Testis (tissue), 5 donors: ENCODE measurements at regions of chr5 and their contacts with region 1.

Region 1: DNA sequence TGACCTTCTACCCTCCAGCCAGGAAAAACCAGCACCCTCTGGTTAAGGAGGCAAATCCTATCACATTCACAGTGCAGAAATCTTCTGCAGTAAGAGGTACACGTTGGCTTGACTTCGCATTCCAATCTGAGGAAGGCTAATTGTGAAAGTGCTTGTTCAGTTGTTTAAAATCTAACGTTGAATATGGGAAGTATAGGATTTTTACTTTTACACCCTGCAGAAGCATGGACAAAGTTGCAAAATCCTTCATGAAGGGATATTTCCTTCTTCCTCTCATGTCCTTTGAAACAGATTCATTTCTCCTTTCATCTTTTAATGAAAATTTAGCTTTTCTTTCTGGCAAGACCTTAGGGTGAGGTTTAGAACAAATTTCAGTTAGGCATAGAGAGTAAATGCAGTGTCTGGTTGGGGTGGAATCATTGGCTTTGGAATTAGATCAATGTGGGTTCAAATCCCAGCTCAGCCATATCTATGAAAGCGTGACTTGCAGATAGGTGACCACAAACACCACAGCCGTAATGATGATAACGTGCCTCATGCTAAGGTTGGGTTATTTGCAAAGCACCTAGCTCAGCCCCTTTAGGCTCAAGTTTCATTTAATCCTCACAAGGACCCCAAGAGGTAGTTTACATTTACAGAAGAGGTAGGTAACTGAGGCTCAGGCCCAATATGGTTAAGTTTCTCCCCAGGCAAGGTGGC is 42.2 kb upstream of the C5orf58 start:
- DNase-seq: no peak
- H3K4me3 ChIP-seq: no peak overlapping the region
- H3K27ac ChIP-seq: no peak overlapping the region
- H3K4me1 ChIP-seq: no peaks in the 10 kb centered on the region
- H3K27me3 ChIP-seq: no peaks in the 10 kb centered on the region
- CTCF ChIP-seq: no peak
- POLR2A ChIP-seq: no peak

Region 2: DNA sequence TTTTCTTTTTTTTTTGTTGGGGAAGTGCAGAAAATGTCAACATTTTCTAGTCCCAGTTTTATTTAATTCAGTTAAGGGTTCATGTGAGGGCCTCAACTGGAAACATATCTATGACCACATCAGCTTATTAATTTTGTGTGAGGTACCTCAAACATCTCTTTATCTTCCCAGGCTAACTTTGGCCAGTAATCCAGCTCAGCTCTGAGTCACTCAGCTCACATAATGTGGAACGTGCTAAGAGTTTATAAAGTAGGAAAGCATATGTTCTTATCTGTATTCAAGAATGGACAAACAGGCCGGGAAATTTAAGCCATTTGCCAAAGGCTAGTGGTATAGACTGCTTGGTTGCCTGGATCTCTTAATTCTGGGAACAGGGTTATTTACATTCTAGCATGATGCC is 328.7 kb before region 1 on chr5:
- intact Hi-C with region 1: no loop called
- DNase-seq: no peak
- H3K4me3 ChIP-seq: no peak overlapping the region
- H3K27ac ChIP-seq: no peak overlapping the region
- H3K4me1 ChIP-seq: no peaks in the 10 kb centered on the region
- H3K27me3 ChIP-seq: no peaks in the 10 kb centered on the region
- CTCF ChIP-seq: no peak
- POLR2A ChIP-seq: no peak

Region 3: DNA sequence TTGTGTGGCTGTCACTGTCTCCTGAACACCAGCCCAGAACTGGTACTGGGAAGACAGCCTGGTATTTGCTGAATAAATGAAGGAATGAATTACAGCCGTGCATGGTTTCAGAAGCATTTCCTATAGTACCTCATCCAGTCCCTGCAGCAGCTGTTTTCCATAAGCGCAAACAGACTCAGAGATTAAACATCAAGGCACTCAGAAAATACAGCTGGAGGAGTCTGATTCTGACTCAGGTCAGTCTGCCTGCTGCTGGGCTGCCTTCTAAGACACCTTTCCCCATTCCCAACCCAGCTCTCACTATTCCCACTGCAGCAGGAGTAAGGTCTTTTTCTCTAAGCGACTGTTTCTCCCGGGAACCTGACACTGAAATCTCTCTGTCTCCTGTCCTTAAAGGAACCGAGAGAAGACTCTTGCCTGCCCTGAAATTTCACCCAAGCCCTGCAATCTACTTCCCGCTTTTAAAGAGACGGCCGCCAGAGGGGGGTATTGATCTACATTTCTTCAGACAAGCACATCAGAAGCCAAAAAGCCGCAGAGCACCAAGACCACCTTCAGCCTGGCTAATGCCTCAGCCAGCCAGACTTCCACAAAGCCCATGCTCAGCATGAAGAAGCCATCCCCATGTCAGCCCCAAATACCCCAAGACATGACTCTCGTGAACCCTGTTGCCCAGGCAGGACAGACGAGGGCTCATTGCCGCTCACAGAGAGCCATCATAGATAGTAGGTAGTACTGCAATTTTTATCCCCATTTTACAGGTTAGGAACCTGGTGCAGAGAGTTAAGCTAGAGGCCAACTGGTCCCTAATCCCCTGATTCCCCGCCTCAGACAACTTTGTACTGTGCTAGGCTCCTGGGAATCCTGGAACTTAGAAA is 90.3 kb before region 1 on chr5:
- intact Hi-C with region 1: loop called (anchors 10 kb)
- DNase-seq: peak; percentile 90
- H3K4me3 ChIP-seq: no peak overlapping the region
- H3K27ac ChIP-seq: no peak overlapping the region
- H3K4me1 ChIP-seq: no peaks in the 10 kb centered on the region
- H3K27me3 ChIP-seq: no peaks in the 10 kb centered on the region
- CTCF ChIP-seq: peak; percentile 58 to 73 (median 69)
- POLR2A ChIP-seq: no peak